PC-3 (cell line): ENCODE measurements at regions of chr14 and their contacts with region 1.

Region 1: DNA sequence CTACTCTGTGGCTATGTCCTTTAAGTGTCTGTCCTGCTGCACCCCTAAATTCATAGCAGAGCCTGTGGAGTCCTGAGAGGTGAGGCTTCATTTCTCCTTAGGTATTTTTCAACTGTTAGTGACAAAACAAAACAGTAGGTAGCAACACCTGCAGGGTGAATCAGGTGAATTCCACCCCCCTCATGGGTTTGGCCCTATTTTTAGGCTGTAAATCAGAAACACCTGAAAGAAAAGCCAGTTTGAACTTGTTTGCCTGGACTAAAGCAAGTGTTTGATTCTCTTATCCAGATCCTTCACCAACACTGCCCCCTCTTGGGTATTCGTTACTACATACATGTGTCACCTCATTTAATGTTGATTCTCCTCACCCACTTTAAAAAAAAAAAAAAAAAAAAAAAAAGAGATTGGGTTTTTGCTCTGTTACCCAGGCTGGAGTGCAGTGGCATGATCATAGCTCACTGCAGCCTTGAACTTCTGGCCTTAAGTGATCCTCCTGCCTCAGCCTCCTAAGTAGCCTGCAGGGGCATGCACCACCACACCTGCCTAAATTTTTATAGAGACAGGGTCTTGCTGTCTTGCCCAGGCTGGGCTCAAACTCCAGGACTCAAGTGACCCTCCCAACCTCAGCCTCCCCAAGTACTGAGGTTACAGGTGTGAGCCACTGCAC is 10.3 kb downstream of the TBPL2 start:
- DNase-seq: peak; percentile 97
- ATAC-seq: peak; percentile 58
- H3K4me3 ChIP-seq: no peak overlapping the region
- H3K27ac ChIP-seq: peak overlapping the region; percentile 13
- H3K4me1 ChIP-seq: peaks cover 51% of the 10 kb centered on the region
- H3K27me3 ChIP-seq: no peaks in the 10 kb centered on the region
- CTCF ChIP-seq: peak; percentile 89

Region 2: DNA sequence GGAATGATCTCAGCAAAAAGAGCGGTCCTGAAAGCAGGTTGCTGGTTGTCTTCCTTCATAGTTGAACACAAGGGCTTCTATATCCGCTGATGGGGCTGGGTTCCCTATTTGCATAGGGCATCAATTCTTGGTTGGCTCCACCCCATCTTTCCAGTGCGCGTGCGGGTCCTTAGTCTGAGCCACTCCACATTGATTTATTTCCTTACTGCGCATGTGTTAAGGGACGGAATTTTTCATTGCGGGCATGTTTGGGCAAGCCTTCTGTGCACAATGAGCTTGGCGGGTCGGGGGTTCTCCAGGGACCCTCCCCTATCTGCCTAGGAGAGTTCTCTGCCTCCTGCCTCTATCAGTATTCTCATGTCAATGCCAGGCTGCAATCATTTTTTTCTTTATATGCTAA is 217.5 kb before region 1 on chr14:
- CTCF ChIA-PET with region 1: no interaction called
- POLR2A ChIA-PET with region 1: no interaction called
- intact Hi-C with region 1: loop called (anchors 1 kb)
- DNase-seq: no peak
- ATAC-seq: peak; percentile 12; the same call in 1 of the 2 replicates
- H3K4me3 ChIP-seq: no peak overlapping the region
- H3K27ac ChIP-seq: no peak overlapping the region
- H3K4me1 ChIP-seq: no peaks in the 10 kb centered on the region
- H3K27me3 ChIP-seq: 0 out of 2 replicates have a peak, but pooled peaks cover under 1% of the 10 kb centered on the region
- CTCF ChIP-seq: no peak

Region 3: DNA sequence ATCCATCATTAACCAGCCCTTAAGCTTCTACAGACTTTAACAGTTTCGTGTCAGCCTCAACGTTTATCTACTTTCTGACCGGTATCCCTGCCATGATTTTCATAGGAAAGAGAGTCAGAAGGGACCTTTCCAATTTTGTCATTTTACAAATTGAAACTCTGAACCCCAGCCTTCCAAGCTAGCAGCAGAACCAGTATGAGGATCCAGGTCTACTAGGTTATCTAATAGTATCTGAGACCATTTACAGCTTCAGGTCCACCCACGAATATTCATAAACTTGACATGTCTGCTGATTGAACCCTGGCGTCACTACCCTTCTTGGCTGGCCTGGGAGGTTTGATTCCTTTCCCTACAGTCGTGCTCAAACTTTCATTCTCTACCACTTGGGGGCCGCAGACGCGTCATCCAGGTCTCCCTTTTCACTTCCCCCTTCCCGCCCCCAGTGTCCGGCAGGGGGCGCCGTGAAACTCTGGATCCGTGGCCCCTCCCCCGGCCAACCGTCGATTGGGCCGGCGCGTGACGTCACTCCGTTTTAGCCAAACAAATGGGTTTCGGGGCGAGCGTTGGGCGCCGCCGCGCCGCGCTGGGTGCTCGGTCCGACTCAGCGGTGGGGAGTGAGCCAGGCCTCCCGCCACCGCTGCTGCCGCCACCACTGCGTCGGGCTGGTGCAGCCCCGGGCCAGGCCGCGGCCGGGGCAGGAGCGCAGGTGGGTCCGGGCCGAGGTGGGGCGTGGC is 159.2 kb before region 1 on chr14 and contains the start of gene FBXO34:
- CTCF ChIA-PET with region 1: interaction called, 12 read pairs
- POLR2A ChIA-PET with region 1: no interaction called
- intact Hi-C with region 1: loop called (anchors 1 kb)
- DNase-seq: peak; percentile 100
- ATAC-seq: peak; percentile 89
- H3K4me3 ChIP-seq: peak within 1 kb of the TSS; percentile 94
- H3K27ac ChIP-seq: peak within 1 kb of the TSS; percentile 15
- H3K4me1 ChIP-seq: peaks cover 33% of the 10 kb centered on the region
- H3K27me3 ChIP-seq: no peaks in the 10 kb centered on the region
- CTCF ChIP-seq: peak; percentile 100
- total RNA-seq, gene FBXO34: 33.6 and 35.9 TPM in 2 replicates

Region 4: GRCh38 chr14:55366271-55366670 is 63.9 kb before region 1 on chr14:
- CTCF ChIA-PET with region 1: no interaction called
- POLR2A ChIA-PET with region 1: no interaction called
- intact Hi-C with region 1: loop called (anchors 1 kb)
- DNase-seq: peak; percentile 96
- ATAC-seq: peak; percentile 97
- H3K4me3 ChIP-seq: peak overlapping the region; percentile 5; the same call in 1 of the 2 replicates
- H3K27ac ChIP-seq: peak overlapping the region; percentile 81
- H3K4me1 ChIP-seq: peaks cover 25% of the 10 kb centered on the region
- H3K27me3 ChIP-seq: no peaks in the 10 kb centered on the region
- CTCF ChIP-seq: no peak

Region 5: GRCh38 chr14:55411426-55412389 is 18.4 kb before region 1 on chr14 and contains the start of gene ATG14:
- CTCF ChIA-PET with region 1: interaction called, 13 read pairs
- POLR2A ChIA-PET with region 1: no interaction called
- intact Hi-C with region 1: loop called (anchors 1 kb)
- DNase-seq: peak; percentile 94
- ATAC-seq: peak; percentile 93
- H3K4me3 ChIP-seq: peak within 1 kb of the TSS; percentile 80
- H3K27ac ChIP-seq: peak within 1 kb of the TSS; percentile 71
- H3K4me1 ChIP-seq: peaks cover 33% of the 10 kb centered on the region
- H3K27me3 ChIP-seq: no peaks in the 10 kb centered on the region
- CTCF ChIP-seq: no peak
- total RNA-seq, gene ATG14: 20.2 and 22.5 TPM in 2 replicates

Region 6: DNA sequence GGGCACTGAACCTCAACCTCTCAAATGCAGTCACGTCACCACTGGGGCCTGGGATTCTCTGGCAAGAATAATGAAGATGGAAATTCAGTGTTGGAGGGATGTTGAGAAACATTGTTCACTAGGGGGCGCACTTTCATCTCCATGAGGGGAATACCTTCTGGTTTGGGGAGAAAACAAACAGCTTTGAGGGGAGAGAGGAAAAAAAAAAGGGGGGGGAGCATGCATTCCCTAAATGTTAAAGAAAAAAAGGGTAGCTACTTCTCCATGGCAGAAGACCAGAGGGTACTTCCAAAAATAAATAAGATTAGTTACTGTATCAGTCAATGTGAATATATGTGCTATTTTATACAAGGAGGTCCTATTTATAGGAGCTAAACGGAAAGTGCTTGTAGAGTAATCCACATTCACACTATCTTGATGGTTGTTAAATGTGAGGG is 16.1 kb after region 1 on chr14:
- CTCF ChIA-PET with region 1: no interaction called
- POLR2A ChIA-PET with region 1: interaction called, 13 read pairs
- intact Hi-C with region 1: no loop called
- DNase-seq: peak; percentile 99
- ATAC-seq: peak; percentile 7
- H3K4me3 ChIP-seq: peak overlapping the region; percentile 22; the same call in 1 of the 2 replicates
- H3K27ac ChIP-seq: peak overlapping the region; percentile 81
- H3K4me1 ChIP-seq: peaks cover 54% of the 10 kb centered on the region
- H3K27me3 ChIP-seq: no peaks in the 10 kb centered on the region
- CTCF ChIP-seq: peak; percentile 99

Region 7: GRCh38 chr14:56087671-56088471 is 657.7 kb after region 1 on chr14:
- CTCF ChIA-PET with region 1: no interaction called
- POLR2A ChIA-PET with region 1: no interaction called
- intact Hi-C with region 1: loop called (anchors 10 kb)
- DNase-seq: no peak
- ATAC-seq: no peak
- H3K4me3 ChIP-seq: no peak overlapping the region
- H3K27ac ChIP-seq: no peak overlapping the region
- H3K4me1 ChIP-seq: no peaks in the 10 kb centered on the region
- H3K27me3 ChIP-seq: peaks cover 95% of the 10 kb centered on the region
- CTCF ChIP-seq: no peak